ENCODE measurements at regions of chr14 and their contacts with region 1.

Region 1: DNA sequence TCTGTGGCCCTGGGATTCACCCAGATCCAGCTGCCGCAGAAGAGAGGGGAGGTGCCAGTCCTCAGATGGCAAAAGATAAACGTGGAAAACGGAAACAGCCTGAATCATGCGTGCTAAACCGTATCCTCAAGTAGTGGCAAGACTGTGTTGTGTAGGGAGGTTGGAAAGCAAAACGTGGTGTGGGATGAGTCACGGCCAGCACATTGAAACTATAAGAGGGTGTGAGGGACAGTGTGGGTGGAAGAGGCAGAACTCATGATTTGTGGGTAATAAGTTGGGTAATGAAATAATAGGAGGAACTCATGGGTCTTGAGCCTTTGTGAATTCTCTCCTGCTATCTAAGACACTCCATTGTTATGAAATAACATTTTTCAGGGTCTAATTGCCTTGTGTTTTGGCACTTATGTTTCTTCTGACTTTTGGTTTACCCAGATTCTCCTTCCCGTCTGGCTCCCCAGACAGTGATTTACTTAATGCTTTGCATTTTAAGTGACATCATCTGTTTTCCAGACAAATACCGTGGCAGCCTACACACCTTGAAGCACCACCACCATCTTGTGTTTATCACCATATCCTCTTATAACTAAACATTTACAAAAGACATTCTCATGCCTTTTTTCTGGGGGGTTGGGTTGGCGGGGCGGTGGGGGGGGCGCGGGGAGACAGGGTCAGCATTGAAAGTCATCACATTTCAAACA is 62.3 kb upstream of the PTCSC3 start:
- DNase-seq: peak; percentile 96
- H3K4me3 ChIP-seq: no peak overlapping the region
- H3K27ac ChIP-seq: peak overlapping the region; percentile 75
- H3K4me1 ChIP-seq: peaks cover 17% of the 10 kb centered on the region
- H3K27me3 ChIP-seq: no peaks in the 10 kb centered on the region
- CTCF ChIP-seq: no peak

Region 2: DNA sequence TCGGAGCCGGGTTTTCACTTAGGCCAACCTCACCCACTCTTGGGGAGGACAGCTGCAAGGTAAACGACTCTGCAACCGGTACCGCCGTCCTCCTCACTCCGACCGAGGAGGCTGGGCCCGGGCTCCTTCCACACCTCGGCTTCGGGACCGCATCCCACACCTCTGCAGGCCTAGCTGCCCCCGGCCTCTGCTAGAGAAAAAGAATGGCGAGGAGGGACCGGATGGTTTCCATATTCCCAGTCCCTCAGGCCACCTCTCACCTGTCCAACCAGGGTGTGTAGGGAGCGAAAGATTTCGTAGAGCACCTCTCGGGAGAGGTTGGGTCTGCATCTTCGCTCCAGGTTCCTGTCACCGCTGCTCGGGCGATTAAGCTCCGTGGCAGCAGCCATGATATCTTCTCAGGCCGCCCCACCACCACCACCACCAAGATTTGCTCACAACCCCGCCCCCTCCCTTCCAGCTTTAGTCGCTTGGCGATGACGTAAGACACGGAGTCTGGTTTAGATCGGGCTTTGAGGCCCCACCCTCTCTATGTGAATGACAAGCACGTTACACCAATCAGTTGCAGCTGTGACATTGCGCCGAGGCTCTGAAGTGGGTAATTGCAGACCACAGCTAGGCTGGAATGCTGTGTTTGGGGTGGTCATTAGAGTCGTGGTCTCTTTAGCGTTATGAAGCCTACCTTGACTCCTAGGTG is 81.5 kb after region 1 on chr14 and contains the start of gene MBIP:
- CTCF ChIA-PET with region 1: no interaction called
- dilution Hi-C with region 1: no loop called
- in situ Hi-C with region 1: no loop called
- intact Hi-C with region 1: loop called (anchors 10 kb)
- DNase-seq: peak; percentile 92
- H3K4me3 ChIP-seq: peak within 1 kb of the TSS; percentile 54 to 84 (median 79)
- H3K27ac ChIP-seq: peak within 1 kb of the TSS; percentile 71
- H3K4me1 ChIP-seq: peaks cover 7% of the 10 kb centered on the region
- H3K27me3 ChIP-seq: peaks cover 4% of the 10 kb centered on the region
- CTCF ChIP-seq: no peak
- total RNA-seq, gene MBIP: 14.8 to 19.9 TPM

Region 3: DNA sequence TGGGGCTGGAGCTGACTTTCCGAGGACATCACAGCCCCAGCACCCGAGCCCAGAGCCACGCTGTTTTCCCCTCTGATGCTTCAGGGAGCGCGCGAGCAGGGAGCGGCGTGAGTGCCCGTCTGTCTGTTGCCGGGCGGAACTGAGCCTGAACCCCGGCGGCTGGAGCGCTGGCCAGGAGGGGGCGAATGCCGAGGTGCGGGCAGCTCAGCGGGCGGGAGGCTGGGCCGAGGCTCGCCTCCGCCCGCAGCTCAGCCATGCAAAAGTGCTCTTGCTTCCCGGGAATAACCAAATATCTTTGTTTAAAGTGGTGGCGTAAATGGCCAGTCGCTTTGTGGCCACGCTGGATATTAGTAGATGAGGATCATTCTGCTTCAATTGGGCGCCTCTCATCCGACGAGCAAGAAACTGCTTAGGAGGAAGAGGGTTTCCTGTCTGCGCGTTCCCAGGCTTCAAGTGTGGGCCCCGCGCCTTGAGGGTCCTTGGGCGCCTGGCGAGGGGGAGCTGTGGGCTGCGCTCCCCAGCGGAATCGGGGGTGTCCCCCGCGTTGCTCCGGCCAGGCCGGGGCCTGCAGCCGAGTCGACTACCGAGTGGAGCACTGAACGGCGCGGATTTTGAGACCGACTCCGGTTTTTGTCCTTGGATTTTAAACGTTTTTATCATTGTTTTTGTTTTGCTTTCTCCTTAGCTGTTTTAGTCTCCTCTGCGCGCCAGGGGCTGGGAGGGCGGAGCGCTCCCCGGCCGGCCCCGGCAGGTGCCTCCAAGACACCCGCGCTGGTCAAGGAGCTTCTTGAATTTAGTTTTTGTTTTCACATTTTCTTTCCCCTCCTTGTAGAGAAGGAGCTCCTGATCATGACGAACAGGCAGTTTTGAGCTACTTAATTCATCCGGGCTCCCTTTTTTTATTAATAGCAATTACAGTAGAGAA is 282.0 kb after region 1 on chr14:
- CTCF ChIA-PET with region 1: no interaction called
- dilution Hi-C with region 1: no loop called
- in situ Hi-C with region 1: no loop called
- intact Hi-C with region 1: loop called (anchors 10 kb)
- DNase-seq: peak; percentile 30
- H3K4me3 ChIP-seq: peak overlapping the region in 2 of 3 experiments; percentile 1 to 4
- H3K27ac ChIP-seq: no peak overlapping the region
- H3K4me1 ChIP-seq: peaks cover 16% of the 10 kb centered on the region
- H3K27me3 ChIP-seq: peaks cover 86% of the 10 kb centered on the region
- CTCF ChIP-seq: peak in 1 of 2 donors; percentile 43

Measured in mammary epithelial cell (primary cell).